ENCODE measurements at regions of chr3 and their contacts with region 1.

Region 1: GRCh38 chr3:124761250-124761796 is 31.1 kb downstream of the UMPS start:
- DNase-seq: peak; percentile 85 to 97 (median 92)
- H3K4me3 ChIP-seq: no peak overlapping the region
- H3K27ac ChIP-seq: peak overlapping the region in 2 of 5 donors; percentile 49 to 57
- H3K4me1 ChIP-seq: peaks cover 0 to 18% of the 10 kb centered on the region in 2 donors
- H3K27me3 ChIP-seq: no peaks in the 10 kb centered on the region
- CTCF ChIP-seq: peak; percentile 95 to 99 (median 96)
- POLR2A ChIP-seq: peak in 1 of 2 donors; percentile 7

Region 2: GRCh38 chr3:124691599-124691998 is 69.7 kb before region 1 on chr3:
- intact Hi-C with region 1: no loop called
- DNase-seq: no peak
- H3K4me3 ChIP-seq: no peak overlapping the region
- H3K27ac ChIP-seq: no peak overlapping the region
- H3K4me1 ChIP-seq: peaks cover 0 to 5% of the 10 kb centered on the region in 2 donors
- H3K27me3 ChIP-seq: no peaks in the 10 kb centered on the region
- CTCF ChIP-seq: no peak
- POLR2A ChIP-seq: no peak

Region 3: GRCh38 chr3:124707656-124708062 is 53.7 kb before region 1 on chr3:
- intact Hi-C with region 1: no loop called
- DNase-seq: peak in 1 of 7 donors; percentile 34
- H3K4me3 ChIP-seq: no peak overlapping the region
- H3K27ac ChIP-seq: no peak overlapping the region
- H3K4me1 ChIP-seq: no peaks in the 10 kb centered on the region
- H3K27me3 ChIP-seq: no peaks in the 10 kb centered on the region
- CTCF ChIP-seq: no peak
- POLR2A ChIP-seq: no peak

Region 4: DNA sequence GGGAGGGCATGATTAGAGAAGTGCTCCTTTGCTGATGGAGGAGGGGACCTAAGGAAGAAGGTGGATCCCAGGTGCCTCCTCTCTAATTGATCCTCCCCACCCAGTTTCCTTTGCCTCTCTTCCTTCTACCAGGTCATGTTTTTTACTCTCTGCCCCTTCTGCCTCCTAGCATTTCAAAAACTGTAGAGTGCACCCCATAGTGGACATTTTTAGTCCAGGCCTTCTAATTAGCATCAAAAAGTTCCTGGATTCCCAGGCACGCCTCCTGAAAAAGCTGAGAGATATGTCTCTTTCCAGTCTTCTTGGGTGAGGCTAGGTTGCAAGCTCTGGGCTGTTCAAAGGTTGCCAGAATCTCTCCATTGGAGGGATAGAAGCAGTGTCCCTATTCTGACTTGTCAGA is 144.5 kb after region 1 on chr3:
- intact Hi-C with region 1: loop called (anchors 2 to 5 kb)
- DNase-seq: no peak
- H3K4me3 ChIP-seq: no peak overlapping the region
- H3K27ac ChIP-seq: no peak overlapping the region
- H3K4me1 ChIP-seq: peaks cover 0 to 3% of the 10 kb centered on the region in 2 donors
- H3K27me3 ChIP-seq: no peaks in the 10 kb centered on the region
- CTCF ChIP-seq: no peak
- POLR2A ChIP-seq: no peak

Region 5: DNA sequence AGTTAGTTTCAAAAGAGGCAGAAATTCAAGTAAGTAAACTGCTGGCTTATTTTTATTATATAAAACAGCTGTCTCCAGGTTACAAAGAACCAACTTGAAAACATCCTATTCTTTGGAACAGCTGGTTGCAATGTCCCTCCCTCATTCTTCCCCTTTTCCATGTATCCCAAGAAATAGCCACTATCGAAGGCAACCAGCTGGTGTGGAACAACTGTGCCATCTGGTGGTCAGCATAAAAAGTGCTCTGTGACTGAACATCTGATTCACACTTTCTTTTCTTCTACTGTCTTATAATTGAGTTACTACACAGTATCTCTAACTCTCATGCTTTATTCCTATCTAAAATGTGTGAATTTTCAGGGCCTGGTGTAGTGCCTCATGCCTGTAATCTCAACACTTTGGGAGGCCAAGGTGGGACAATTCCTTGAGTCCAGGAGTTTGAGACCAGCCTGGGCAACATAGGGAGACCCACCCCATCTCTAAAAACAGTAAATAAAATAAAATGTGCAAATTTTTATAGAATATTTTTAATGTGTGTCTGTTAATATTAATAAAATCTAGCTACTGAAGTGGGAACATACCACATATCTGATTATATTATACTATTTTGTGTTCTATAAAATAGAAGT is 824.4 kb after region 1 on chr3:
- intact Hi-C with region 1: loop called in 1 of 2 experiments (anchors 10 kb)
- DNase-seq: peak; percentile 53 to 85 (median 63)
- H3K4me3 ChIP-seq: no peak overlapping the region
- H3K27ac ChIP-seq: no peak overlapping the region
- H3K4me1 ChIP-seq: peaks cover 0 to 23% of the 10 kb centered on the region in 2 donors
- H3K27me3 ChIP-seq: no peaks in the 10 kb centered on the region
- CTCF ChIP-seq: peak; percentile 71 to 94 (median 87)
- POLR2A ChIP-seq: no peak